ENCODE measurements at regions of chr11 and their contacts with region 1.

Region 1: DNA sequence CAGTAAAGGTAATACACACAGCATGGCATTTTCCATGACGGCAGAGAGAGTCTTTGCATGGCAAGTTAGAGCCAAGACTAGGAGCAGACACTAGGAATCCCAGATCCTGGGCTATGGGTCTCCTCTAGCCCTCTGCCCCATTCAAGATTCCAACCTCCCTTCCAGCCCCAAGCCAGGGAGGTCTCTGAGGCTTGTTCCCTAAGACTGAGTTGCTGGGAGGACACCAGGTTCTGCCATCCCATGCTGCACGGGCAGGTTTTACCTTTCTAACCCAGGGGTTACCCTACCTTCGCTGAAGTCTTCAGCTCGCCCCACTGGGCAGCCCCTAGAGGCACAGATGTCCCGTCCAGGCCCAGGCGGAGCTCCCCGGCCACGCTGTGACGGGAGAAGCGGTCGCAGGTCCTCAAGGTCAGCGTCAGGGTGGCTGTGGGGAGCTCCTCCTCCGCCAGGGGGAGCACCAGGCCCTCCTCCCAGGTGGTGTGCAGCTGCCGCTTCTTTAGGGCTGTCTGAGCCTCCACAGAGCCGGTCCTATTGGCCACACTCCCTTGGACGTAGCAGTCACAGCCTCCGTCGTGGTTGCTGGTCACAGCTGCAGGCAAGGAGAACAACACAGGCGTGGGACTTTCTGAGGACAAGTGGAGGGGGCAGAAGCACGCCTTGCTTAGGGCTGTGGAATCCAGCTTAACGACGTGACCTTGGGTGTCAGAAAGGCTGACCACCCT is 33.8 kb downstream of the SYT13 start:
- DNase-seq: peak; percentile 65
- ATAC-seq: peak; percentile 64
- H3K4me3 Mint-ChIP-seq: no peak overlapping the region
- H3K27ac Mint-ChIP-seq: no peak overlapping the region
- H3K4me1 Mint-ChIP-seq: no peaks in the 10 kb centered on the region
- H3K27me3 Mint-ChIP-seq: peaks cover 17% of the 10 kb centered on the region

Region 2: DNA sequence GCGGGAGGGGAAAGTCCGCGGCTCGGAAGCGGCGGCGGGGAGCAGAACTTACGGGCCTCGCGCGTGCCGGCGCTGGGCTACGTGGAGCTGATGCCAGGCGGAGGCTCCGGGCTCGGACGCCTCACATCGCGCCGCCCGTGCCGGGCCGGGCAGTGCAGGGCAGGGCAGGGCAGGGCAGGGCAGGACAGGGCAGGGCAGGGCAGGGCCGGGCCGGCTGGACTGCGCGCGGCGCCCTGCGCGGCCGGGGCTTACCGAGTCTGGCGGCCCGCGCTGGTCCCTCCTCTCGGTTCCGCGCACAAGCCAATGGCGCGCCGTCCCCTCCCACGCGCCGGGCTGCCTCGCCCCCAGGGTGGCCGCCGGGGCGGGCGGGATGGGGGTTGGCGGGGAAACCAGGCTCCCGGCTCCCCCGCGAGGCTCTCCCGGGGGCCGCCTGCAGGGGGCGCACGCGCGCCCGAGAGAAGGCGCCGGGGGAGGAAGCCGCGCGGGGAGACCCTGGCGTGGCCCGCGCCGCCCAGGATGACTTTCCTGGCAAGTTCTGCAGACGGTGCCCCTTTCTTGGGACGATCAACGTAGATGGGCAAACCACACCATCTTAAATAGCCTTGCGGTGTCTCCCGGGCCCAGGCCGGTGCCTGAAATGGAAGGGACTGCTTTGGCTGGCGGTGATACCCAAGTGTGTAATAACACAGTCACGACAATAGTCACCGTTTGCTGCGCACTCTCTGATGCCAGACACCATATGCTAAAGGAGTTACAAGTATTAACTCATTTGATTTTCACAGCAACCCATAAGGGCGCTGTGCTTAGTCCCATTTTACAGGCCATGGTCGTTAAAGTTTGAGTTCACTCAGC is 301.4 kb before region 1 on chr11 and contains the start of gene TP53I11:
- CTCF ChIA-PET with region 1: no interaction called
- POLR2A ChIA-PET with region 1: no interaction called
- intact Hi-C with region 1: no loop called
- DNase-seq: peak; percentile 84
- ATAC-seq: peak; percentile 76
- H3K4me3 Mint-ChIP-seq: peak within 1 kb of the TSS; percentile 71
- H3K27ac Mint-ChIP-seq: no peak within 1 kb of the TSS
- H3K4me1 Mint-ChIP-seq: peaks cover 10% of the 10 kb centered on the region
- H3K27me3 Mint-ChIP-seq: no peaks in the 10 kb centered on the region
- total RNA-seq, gene TP53I11: 14.3 to 15.8 TPM

Region 3: DNA sequence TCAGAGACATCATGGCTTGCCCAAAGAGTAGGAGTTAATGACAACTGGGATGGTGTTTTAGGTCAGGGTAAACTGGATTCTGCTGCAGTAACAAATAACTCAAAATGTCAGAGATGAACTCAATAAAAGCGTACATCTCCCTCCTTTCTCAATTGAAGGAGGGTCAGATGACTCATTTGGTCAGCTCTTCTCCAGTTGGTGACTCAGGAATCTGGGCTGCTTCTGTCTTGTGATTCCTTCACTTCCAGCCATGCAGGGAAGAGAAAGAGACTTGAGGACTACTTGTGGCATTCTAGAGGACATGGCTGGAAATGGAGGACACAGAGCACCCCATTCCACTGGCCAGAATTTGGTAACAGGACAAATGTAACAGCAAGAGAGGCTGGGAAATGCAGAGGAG is 37.1 kb after region 1 on chr11:
- CTCF ChIA-PET with region 1: interaction called, 4 read pairs
- POLR2A ChIA-PET with region 1: no interaction called
- intact Hi-C with region 1: loop called in 1 of 2 experiments (anchors 1 kb)
- DNase-seq: no peak
- ATAC-seq: no peak
- H3K4me3 Mint-ChIP-seq: no peak overlapping the region
- H3K27ac Mint-ChIP-seq: no peak overlapping the region
- H3K4me1 Mint-ChIP-seq: no peaks in the 10 kb centered on the region
- H3K27me3 Mint-ChIP-seq: peaks cover 59% of the 10 kb centered on the region

Region 4: GRCh38 chr11:45332276-45332934 is 80.1 kb after region 1 on chr11:
- CTCF ChIA-PET with region 1: interaction called, 4 read pairs
- POLR2A ChIA-PET with region 1: no interaction called
- intact Hi-C with region 1: loop called in 1 of 2 experiments (anchors 2 kb)
- DNase-seq: peak; percentile 51
- ATAC-seq: peak; percentile 57
- H3K4me3 Mint-ChIP-seq: no peak overlapping the region
- H3K27ac Mint-ChIP-seq: no peak overlapping the region
- H3K4me1 Mint-ChIP-seq: no peaks in the 10 kb centered on the region
- H3K27me3 Mint-ChIP-seq: peaks cover 8% of the 10 kb centered on the region

Region 5: GRCh38 chr11:45344028-45344427 is 91.7 kb after region 1 on chr11:
- CTCF ChIA-PET with region 1: no interaction called
- POLR2A ChIA-PET with region 1: no interaction called
- intact Hi-C with region 1: no loop called
- DNase-seq: no peak
- ATAC-seq: no peak
- H3K4me3 Mint-ChIP-seq: no peak overlapping the region
- H3K27ac Mint-ChIP-seq: no peak overlapping the region
- H3K4me1 Mint-ChIP-seq: peaks cover 10% of the 10 kb centered on the region
- H3K27me3 Mint-ChIP-seq: peaks cover 6% of the 10 kb centered on the region

Measured in activated CD4-positive, alpha-beta T cell treated with anti-CD3 and anti-CD28 coated beads for 36 hours (primary cell).